Calu3 (cell line): ENCODE measurements at regions of chr19 and their contacts with region 1.

Region 1: GRCh38 chr19:18461451-18461850 is 23.5 kb upstream of the ISYNA1 start:
- DNase-seq: no peak
- H3K4me3 Mint-ChIP-seq: no peak overlapping the region
- H3K27ac Mint-ChIP-seq: no peak overlapping the region
- H3K4me1 Mint-ChIP-seq: no peaks in the 10 kb centered on the region
- H3K27me3 Mint-ChIP-seq: no peaks in the 10 kb centered on the region
- CTCF ChIP-seq: no peak

Region 2: GRCh38 chr19:18450931-18451845 is 10.3 kb before region 1 on chr19:
- CTCF ChIA-PET with region 1: interaction called, 11 read pairs
- intact Hi-C with region 1: no loop called
- DNase-seq: peak; percentile 89
- H3K4me3 Mint-ChIP-seq: no peak overlapping the region
- H3K27ac Mint-ChIP-seq: no peak overlapping the region
- H3K4me1 Mint-ChIP-seq: no peaks in the 10 kb centered on the region
- H3K27me3 Mint-ChIP-seq: no peaks in the 10 kb centered on the region
- CTCF ChIP-seq: peak; percentile 86